Caco-2 (cell line): ENCODE measurements at regions of chr17 and their contacts with region 1.

Region 1: DNA sequence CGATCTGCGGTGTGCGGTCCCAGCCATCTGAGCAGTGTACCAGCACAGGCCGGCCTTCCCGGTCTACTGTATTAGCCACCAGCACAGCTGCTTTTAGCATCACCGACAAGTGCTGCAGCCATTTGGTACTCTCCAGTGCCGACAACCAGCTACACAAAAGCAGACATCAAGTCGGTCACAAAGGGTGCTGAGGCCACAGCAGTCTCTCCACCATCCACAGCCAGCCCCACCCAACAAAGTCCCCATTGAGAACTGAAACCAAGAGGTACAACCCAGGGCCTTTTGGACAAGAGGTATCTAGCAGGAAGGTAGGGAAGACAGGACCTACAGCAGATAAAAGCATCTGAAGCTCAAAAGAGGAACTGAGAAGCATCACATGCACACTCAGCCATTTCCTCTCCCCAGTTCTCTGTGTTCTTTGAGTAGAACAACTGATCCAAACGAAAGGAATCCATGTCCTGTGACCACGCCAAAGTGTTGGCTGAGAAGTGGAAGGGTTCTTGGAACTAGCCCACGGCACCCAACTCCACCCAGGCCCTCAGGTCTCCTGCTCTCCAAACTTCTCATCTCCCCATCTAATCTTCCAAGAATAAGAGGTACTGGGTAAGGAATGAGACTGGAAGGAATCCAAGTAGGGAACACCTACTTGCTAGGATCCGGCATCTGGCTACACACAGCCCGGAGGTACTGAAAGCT is 9.5 kb downstream of the MTMR4 start:
- DNase-seq: peak in 1 of 2 experiments; percentile 2
- H3K4me3 ChIP-seq: no peak overlapping the region
- H3K4me3 Mint-ChIP-seq: no peak overlapping the region
- H3K27ac Mint-ChIP-seq: no peak overlapping the region
- H3K4me1 ChIP-seq: no peaks in the 10 kb centered on the region
- H3K4me1 Mint-ChIP-seq: no peaks in the 10 kb centered on the region
- H3K27me3 ChIP-seq: no peaks in the 10 kb centered on the region
- H3K27me3 Mint-ChIP-seq: no peaks in the 10 kb centered on the region
- CTCF ChIP-seq: no peak

Region 2: GRCh38 chr17:58679263-58680037 is 174.5 kb after region 1 on chr17:
- CTCF ChIA-PET with region 1: no interaction called
- POLR2A ChIA-PET with region 1: interaction called, 13 read pairs
- intact Hi-C with region 1: no loop called
- DNase-seq: peak; percentile 72 to 78
- H3K4me3 ChIP-seq: no peak overlapping the region
- H3K4me3 Mint-ChIP-seq: peak overlapping the region; percentile 49
- H3K27ac Mint-ChIP-seq: peak overlapping the region; percentile 97
- H3K4me1 ChIP-seq: peaks cover 4% of the 10 kb centered on the region; the same call in 1 of the 2 replicates
- H3K4me1 Mint-ChIP-seq: peaks cover 13% of the 10 kb centered on the region
- H3K27me3 ChIP-seq: no peaks in the 10 kb centered on the region
- H3K27me3 Mint-ChIP-seq: no peaks in the 10 kb centered on the region
- CTCF ChIP-seq: no peak